Heart left ventricle (tissue), 16 donors: ENCODE measurements at regions of chr1 and their contacts with region 1.

Region 1: GRCh38 chr1:91742848-91743292 is 143.1 kb downstream of the TGFBR3 start:
- DNase-seq: peak in 2 of 5 donors; percentile 56 to 66
- ATAC-seq: peak in 3 of 4 donors; percentile 25 to 65 (median 50)
- H3K4me3 ChIP-seq: no peak overlapping the region
- H3K27ac ChIP-seq: peak overlapping the region in 9 of 12 donors; percentile 13 to 77 (median 54)
- H3K4me1 ChIP-seq: peaks cover 0 to 61% (median 34%) of the 10 kb centered on the region in 12 donors
- H3K27me3 ChIP-seq: no peaks in the 10 kb centered on the region
- CTCF ChIP-seq: no peak
- POLR2A ChIP-seq: no peak

Region 2: GRCh38 chr1:91795591-91796389 is 52.9 kb after region 1 on chr1:
- intact Hi-C with region 1: loop called in 1 of 10 experiments (anchors 10 kb)
- DNase-seq: no peak
- ATAC-seq: no peak
- H3K4me3 ChIP-seq: no peak overlapping the region
- H3K27ac ChIP-seq: peak overlapping the region in 4 of 12 donors; percentile 7 to 76 (median 24)
- H3K4me1 ChIP-seq: peaks cover 0 to 69% (median 46%) of the 10 kb centered on the region in 12 donors
- H3K27me3 ChIP-seq: no peaks in the 10 kb centered on the region
- CTCF ChIP-seq: no peak
- POLR2A ChIP-seq: no peak